MCF 10A (cell line): ENCODE measurements at regions of chr12 and their contacts with region 1.

Region 1: DNA sequence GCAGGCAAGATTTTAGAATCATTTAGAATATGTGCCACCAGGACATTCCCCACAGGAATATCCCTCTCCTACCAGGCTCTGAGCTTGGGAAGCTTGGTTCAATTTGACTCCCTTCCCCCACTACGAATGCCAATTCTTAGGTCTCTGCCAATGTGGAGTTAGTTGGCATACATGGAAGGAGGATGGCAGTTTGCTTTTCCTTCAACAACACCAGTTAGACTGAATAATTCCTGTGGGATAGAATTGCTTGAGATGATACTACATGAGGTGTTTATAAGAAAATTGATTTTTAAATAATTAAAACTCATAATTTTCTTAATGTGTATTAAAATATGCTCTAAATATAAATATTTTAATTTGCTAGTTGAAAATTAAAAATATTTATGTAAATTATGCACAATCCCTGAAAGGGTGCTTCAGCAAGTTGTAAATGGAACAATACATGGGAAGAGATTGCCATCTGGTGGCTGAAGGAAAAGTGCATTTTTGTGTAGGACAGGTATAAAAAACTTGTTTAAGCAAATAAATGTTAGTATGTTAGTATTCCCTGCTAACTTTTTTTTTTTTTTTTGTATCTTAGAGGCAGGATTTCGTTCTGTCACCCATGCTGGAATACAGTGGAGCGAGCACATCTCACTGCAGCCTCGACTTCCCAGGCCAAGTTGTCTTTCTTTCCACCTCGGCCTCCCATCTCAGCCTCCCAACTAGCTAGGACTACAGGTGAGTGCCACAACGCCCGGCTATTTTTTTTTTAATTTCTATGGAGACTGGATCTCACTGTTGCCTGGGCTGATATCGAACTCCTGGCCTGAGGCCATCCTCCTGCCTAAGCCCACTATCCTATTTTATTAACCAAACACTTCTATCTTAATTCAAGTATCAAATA is 25.8 kb upstream of the STRAP start:
- DNase-seq: peak; percentile 76
- H3K4me3 Mint-ChIP-seq: no peak overlapping the region
- H3K27ac Mint-ChIP-seq: peak overlapping the region; percentile 75
- H3K4me1 Mint-ChIP-seq: peaks cover 26% of the 10 kb centered on the region
- H3K27me3 Mint-ChIP-seq: no peaks in the 10 kb centered on the region
- CTCF ChIP-seq: peak; percentile 82

Region 2: DNA sequence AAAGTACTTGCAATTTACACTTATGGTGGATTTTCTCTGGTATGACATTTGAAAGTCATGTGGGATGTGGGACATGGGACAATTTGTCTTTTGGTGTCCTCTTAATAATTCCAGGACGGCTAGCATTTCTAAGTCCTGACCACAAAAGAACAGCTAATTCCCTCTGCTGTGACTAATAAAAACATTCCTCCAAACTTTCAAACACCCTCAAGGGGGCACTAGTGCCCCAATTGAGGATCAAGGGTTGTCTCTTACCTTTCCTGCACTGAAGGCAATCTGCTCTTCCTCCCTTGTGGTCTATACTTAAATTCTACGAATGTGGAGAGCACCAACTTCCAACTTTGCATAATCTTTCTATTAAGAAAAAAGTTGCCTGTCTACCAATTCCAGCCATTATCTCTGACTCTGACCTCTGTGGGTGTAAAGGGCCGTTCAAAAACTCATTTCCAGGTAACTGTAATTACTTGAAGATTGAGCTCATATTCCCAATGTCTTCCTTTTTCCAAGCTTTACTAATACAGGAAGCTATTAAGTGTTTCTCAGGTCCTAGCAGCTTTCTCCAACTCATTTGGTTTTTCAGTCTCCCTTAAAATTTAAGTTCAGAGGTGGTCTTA is 323.9 kb before region 1 on chr12:
- CTCF ChIA-PET with region 1: interaction called, 44 read pairs
- POLR2A ChIA-PET with region 1: interaction called, 4 read pairs
- intact Hi-C with region 1: loop called (anchors 1 kb)
- DNase-seq: peak; percentile 89
- H3K4me3 Mint-ChIP-seq: no peak overlapping the region
- H3K27ac Mint-ChIP-seq: peak overlapping the region; percentile 57
- H3K4me1 Mint-ChIP-seq: peaks cover 29% of the 10 kb centered on the region
- H3K27me3 Mint-ChIP-seq: no peaks in the 10 kb centered on the region
- CTCF ChIP-seq: peak; percentile 71

Region 3: DNA sequence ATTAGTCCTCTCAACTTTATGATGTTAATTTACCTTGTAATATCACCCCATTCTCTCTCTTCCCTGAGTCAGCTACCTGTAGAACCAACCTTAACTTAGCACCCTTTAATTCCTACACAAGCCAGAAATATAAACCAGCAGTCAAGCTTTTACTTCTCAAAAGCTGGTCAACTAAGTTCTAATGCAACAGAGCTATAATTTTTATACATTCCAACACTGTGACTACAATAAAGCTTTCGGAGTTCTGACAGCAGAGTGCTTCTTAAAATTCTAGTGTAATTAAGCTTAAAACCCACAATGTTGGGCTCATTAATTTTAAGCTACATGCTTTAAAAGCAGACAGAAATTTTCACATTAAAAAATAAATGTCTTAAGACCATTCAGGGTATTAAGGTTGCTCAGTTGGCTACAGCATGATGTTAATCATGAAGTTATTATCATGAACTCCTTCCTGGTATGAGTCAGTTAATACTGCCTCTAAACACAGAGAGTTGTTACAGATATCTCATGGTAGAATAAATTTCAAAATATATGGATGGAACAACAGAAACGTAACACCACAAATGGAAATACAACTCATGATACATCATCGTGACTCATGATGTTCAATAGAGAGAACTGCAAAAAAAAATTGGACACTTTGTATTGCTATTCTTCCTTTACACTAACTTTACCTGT is 193.9 kb before region 1 on chr12:
- CTCF ChIA-PET with region 1: no interaction called
- POLR2A ChIA-PET with region 1: interaction called, 3 read pairs
- intact Hi-C with region 1: loop called (anchors 10 kb)
- DNase-seq: peak; percentile 89
- H3K4me3 Mint-ChIP-seq: peak overlapping the region; percentile 55
- H3K27ac Mint-ChIP-seq: peak overlapping the region; percentile 97
- H3K4me1 Mint-ChIP-seq: peaks cover 12% of the 10 kb centered on the region
- H3K27me3 Mint-ChIP-seq: no peaks in the 10 kb centered on the region
- CTCF ChIP-seq: no peak

Region 4: GRCh38 chr12:15772405-15773018 is 83.8 kb before region 1 on chr12:
- CTCF ChIA-PET with region 1: interaction called, 21 read pairs
- POLR2A ChIA-PET with region 1: interaction called, 6 read pairs
- intact Hi-C with region 1: loop called (anchors 1 kb)
- DNase-seq: peak; percentile 55
- H3K4me3 Mint-ChIP-seq: no peak overlapping the region
- H3K27ac Mint-ChIP-seq: no peak overlapping the region
- H3K4me1 Mint-ChIP-seq: peaks cover 44% of the 10 kb centered on the region
- H3K27me3 Mint-ChIP-seq: no peaks in the 10 kb centered on the region
- CTCF ChIP-seq: peak; percentile 42

Region 5: DNA sequence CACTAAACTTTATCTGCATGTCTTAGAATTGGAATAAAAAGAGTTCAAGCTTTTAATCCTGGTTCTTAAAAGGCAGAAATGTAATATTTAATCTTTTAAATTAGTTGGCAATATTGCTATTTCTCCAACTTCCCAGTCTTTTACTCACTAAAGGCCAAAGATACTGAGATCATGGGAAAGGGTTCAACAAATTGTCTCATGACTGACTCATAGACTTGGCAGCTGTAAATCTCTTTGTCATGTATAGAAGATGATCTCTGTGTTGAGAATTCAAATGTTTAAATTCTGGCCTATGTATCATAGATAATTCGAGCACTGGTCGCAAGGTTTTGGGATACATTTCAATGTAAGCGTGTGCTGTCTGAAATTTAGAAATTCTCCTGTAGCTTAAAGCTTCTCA is 14.2 kb before region 1 on chr12:
- CTCF ChIA-PET with region 1: interaction called, 10 read pairs
- POLR2A ChIA-PET with region 1: interaction called, 4 read pairs
- intact Hi-C with region 1: no loop called
- DNase-seq: peak; percentile 68
- H3K4me3 Mint-ChIP-seq: no peak overlapping the region
- H3K27ac Mint-ChIP-seq: no peak overlapping the region
- H3K4me1 Mint-ChIP-seq: peaks cover 12% of the 10 kb centered on the region
- H3K27me3 Mint-ChIP-seq: no peaks in the 10 kb centered on the region
- CTCF ChIP-seq: no peak

Region 6: GRCh38 chr12:15882118-15882971 is 26.0 kb after region 1 on chr12 and contains the start of gene STRAP:
- CTCF ChIA-PET with region 1: interaction called, 3 read pairs
- POLR2A ChIA-PET with region 1: interaction called, 12 read pairs
- intact Hi-C with region 1: no loop called
- DNase-seq: peak; percentile 96
- H3K4me3 Mint-ChIP-seq: peak within 1 kb of the TSS; percentile 92
- H3K27ac Mint-ChIP-seq: peak within 1 kb of the TSS; percentile 95
- H3K4me1 Mint-ChIP-seq: peaks cover 26% of the 10 kb centered on the region
- H3K27me3 Mint-ChIP-seq: no peaks in the 10 kb centered on the region
- CTCF ChIP-seq: no peak
- total RNA-seq, gene STRAP: 203 and 233 TPM in 2 replicates

Region 7: DNA sequence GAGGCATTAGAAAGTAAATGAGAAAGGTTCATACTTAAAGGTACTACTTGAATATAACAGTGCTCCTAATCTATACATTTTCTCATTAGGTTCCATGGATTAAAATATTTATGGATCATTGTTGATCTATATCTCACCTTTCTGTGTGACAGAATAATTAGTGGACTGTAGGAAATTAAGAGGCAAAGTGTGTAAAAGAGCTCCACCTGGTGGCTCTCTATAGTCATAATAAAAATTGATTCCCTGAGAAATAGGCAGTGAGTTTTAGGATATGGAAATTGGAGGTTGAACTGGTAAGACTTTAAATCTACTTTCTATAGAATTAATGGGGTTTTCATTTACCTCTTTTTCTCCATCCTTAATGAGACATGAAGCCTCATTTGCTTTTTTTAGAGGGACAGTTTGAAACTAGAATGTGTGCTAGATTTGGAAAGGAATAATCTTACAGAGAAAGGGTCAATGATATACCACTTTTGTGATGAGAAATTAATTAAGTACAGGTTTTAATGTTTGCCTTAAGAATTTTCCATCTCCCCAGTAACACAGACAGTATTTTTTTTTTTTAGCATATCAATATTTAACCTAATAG is 43.0 kb after region 1 on chr12:
- CTCF ChIA-PET with region 1: interaction called, 4 read pairs
- POLR2A ChIA-PET with region 1: no interaction called
- intact Hi-C with region 1: loop called (anchors 2 kb)
- DNase-seq: peak; percentile 59
- H3K4me3 Mint-ChIP-seq: no peak overlapping the region
- H3K27ac Mint-ChIP-seq: peak overlapping the region; percentile 16
- H3K4me1 Mint-ChIP-seq: no peaks in the 10 kb centered on the region
- H3K27me3 Mint-ChIP-seq: no peaks in the 10 kb centered on the region
- CTCF ChIP-seq: peak; percentile 59